Calu3 (cell line): ENCODE measurements at regions of chr1 and their contacts with region 1.

Region 1: DNA sequence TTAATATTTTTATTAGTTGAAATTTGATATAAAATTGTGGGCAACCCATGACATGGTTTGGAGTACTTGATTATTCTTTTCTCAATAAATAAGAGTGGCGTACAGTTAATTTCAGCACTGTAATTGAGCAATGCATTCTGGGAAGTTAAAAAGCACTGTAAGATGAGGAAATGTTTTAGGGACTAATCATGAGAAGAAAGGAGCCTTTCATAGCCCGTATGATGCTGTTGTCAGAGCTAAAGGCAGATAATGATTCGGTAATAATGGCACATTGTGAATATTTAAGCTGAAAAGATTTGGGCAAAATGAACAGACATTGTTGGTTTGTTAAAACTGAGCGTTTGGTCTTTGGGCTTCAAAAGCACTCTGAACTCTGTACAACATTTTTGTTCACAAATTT is 139.3 kb downstream of the NFIA start:
- DNase-seq: no peak
- H3K4me3 Mint-ChIP-seq: peak overlapping the region; percentile 43
- H3K27ac Mint-ChIP-seq: peak overlapping the region; percentile 92
- H3K4me1 Mint-ChIP-seq: peaks cover 11% of the 10 kb centered on the region
- H3K27me3 Mint-ChIP-seq: no peaks in the 10 kb centered on the region
- CTCF ChIP-seq: no peak

Region 2: DNA sequence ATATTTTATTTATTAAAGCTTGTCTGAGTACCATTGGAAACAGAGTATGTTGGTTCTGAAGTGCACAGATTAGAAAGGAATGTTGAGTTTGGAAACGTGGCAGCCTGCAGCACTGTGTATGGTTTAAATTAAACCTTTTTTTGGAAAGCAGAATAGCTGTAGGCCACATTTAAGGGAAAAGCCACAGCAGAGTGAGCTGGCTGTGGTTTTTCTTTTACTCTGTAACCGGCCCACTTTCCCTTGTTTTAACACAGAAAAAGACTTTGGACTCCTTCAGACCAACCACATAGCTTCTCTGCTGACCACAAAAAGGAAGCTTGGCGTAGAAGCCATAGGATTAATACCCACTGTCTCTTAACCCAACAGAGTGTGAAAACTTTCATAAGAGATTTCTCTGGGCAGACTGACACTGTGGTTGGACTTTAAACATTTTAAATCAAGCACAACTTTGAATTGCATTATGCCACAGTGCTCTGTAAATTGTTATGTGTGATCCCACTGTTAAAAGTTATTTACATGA is 64.1 kb before region 1 on chr1:
- CTCF ChIA-PET with region 1: interaction called, 4 read pairs
- intact Hi-C with region 1: loop called (anchors 2 kb)
- DNase-seq: no peak
- H3K4me3 Mint-ChIP-seq: no peak overlapping the region
- H3K27ac Mint-ChIP-seq: no peak overlapping the region
- H3K4me1 Mint-ChIP-seq: peaks cover 43% of the 10 kb centered on the region
- H3K27me3 Mint-ChIP-seq: no peaks in the 10 kb centered on the region
- CTCF ChIP-seq: no peak

Region 3: GRCh38 chr1:61270761-61271411 is 49.2 kb after region 1 on chr1:
- CTCF ChIA-PET with region 1: no interaction called
- intact Hi-C with region 1: no loop called
- DNase-seq: no peak
- H3K4me3 Mint-ChIP-seq: no peak overlapping the region
- H3K27ac Mint-ChIP-seq: no peak overlapping the region
- H3K4me1 Mint-ChIP-seq: peaks cover 14% of the 10 kb centered on the region
- H3K27me3 Mint-ChIP-seq: no peaks in the 10 kb centered on the region
- CTCF ChIP-seq: no peak

Region 4: DNA sequence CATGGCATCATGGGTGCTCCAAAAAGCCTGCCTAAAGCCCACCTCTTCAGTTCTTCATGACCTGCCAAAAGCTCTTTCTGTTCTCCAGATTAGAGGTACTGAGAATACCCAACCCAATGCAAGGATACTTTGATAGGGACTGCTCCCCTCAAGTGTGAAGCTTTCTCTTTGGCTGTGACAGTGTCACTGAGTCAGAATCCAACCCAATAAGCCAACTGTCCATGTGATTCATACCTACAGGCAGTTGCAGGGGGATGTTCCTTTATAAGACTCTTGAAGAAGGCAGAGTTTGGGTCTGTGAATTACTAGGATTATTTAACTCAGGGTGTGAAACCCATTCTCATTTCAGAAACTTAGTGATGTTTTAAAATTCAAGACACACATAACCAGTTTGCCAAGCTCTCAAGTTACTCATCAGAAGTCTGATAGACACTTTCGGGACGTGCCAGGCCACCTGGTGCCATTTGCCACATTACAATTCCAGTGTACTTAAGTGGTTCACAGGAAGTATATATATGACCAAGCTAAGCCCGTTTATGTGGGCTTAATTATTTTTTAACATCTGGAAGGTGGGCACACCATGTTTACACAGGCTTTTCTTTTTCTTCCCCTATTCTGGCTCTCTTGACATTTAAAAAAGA is 126.5 kb after region 1 on chr1:
- CTCF ChIA-PET with region 1: no interaction called
- intact Hi-C with region 1: no loop called
- DNase-seq: no peak
- H3K4me3 Mint-ChIP-seq: no peak overlapping the region
- H3K27ac Mint-ChIP-seq: no peak overlapping the region
- H3K4me1 Mint-ChIP-seq: peaks cover 10% of the 10 kb centered on the region
- H3K27me3 Mint-ChIP-seq: no peaks in the 10 kb centered on the region
- CTCF ChIP-seq: no peak